Transverse colon (tissue), 4 donors: ENCODE measurements at regions of chr14 and their contacts with region 1.

Region 1: DNA sequence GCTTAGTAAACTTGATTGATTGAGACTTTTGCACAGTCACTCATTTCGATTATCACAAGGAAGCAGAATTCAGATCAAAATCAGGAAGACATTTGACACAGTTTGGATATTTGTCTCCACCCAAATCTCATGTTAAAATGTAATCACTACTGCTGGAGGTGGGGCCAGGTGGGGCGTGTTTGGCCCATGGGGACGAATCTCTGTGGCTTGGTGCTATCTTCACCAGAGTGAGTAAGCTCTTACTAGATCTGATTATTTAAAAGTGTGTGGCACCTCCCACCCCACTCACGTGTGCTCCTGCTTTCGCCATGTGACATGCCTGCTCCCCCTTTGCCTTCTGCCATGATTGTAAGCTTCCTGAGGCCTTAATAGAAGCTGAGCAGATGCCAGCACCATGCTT is 291.4 kb downstream of the PCNX1 start:
- DNase-seq: peak; percentile 25
- H3K4me3 ChIP-seq: no peak overlapping the region
- H3K27ac ChIP-seq: no peak overlapping the region
- H3K4me1 ChIP-seq: no peaks in the 10 kb centered on the region
- H3K27me3 ChIP-seq: no peaks in the 10 kb centered on the region
- CTCF ChIP-seq: no peak
- EP300 ChIP-seq: no peak
- POLR2A ChIP-seq: no peak

Region 2: GRCh38 chr14:70121521-70121920 is 1077.2 kb before region 1 on chr14:
- in situ Hi-C with region 1: no loop called
- intact Hi-C with region 1: loop called (anchors 5 kb)
- DNase-seq: no peak
- H3K4me3 ChIP-seq: no peak overlapping the region
- H3K27ac ChIP-seq: no peak overlapping the region
- H3K4me1 ChIP-seq: no peaks in the 10 kb centered on the region
- H3K27me3 ChIP-seq: peaks cover 3% of the 10 kb centered on the region
- CTCF ChIP-seq: no peak
- EP300 ChIP-seq: no peak
- POLR2A ChIP-seq: no peak